Heart left ventricle (tissue), 16 donors: ENCODE measurements at regions of chr2 and their contacts with region 1.

Region 1: DNA sequence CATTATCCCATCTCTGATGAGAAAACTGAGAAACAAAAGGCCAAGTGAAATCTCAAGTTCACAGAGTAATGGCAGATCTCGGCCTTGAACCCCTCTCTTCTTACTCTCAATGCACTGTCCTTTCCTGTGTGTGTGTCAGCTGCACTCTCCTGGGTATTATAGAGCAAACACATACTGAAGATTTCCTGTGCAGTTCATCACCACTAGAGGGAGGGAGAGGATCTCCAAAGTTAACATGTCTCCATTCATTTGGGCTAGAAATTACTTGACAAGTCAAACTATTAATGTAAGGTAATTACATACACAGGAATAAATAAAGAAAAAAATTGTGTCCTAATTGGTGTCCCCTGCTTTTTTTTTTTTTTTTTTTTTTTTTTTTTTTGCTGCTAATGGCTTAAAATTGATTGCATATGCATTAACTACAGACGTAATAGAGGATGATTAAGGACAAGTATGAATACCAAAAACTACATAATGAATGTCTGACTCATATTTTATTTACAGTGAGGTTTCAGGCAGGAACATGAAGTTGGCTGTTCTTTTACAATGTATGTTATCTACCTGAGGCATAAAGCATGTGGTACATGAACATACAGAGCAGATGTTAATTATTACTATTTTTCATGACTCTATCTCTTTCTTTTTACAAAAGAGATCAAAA is 269.2 kb downstream of the NYAP2 start:
- DNase-seq: peak in 1 of 5 donors; percentile 10
- ATAC-seq: peak in 3 of 4 donors; percentile 63 to 69 (median 67)
- H3K4me3 ChIP-seq: no peak overlapping the region
- H3K27ac ChIP-seq: no peak overlapping the region
- H3K4me1 ChIP-seq: no peaks in the 10 kb centered on the region
- H3K27me3 ChIP-seq: peaks cover 0 to 15% (median 0%) of the 10 kb centered on the region in 9 donors
- CTCF ChIP-seq: peak; percentile 43 to 76 (median 58)
- POLR2A ChIP-seq: no peak

Region 2: GRCh38 chr2:225797394-225797793 is 128.7 kb after region 1 on chr2:
- intact Hi-C with region 1: loop called in 2 of 10 experiments (anchors 10 kb)
- DNase-seq: no peak
- ATAC-seq: no peak
- H3K4me3 ChIP-seq: no peak overlapping the region
- H3K27ac ChIP-seq: no peak overlapping the region
- H3K4me1 ChIP-seq: no peaks in the 10 kb centered on the region
- H3K27me3 ChIP-seq: no peaks in the 10 kb centered on the region
- CTCF ChIP-seq: peak in 7 of 12 donors; percentile 11 to 48 (median 24)
- POLR2A ChIP-seq: no peak

Region 3: DNA sequence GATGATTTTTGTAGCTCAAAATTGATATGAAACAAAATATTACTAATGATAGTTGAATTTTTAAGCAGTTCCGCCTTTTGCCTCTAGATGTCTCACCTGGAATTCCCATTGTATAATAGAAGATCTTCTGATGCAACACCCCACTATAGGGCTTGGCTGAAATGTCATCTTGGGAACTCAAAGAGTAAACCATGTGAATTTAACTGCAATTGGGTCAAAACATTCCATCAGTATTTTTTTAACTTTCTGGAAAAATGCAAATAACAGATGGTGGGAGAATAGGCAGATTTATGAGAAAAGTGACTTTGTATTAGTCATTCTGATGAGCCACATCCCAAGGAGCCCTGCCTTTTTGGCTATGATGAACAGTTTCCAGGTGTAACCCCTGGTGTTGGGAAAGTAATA is 220.7 kb after region 1 on chr2:
- intact Hi-C with region 1: loop called in 1 of 10 experiments (anchors 10 kb)
- DNase-seq: peak in 1 of 5 donors; percentile 7
- ATAC-seq: peak in 2 of 4 donors; percentile 52 to 64
- H3K4me3 ChIP-seq: no peak overlapping the region
- H3K27ac ChIP-seq: no peak overlapping the region
- H3K4me1 ChIP-seq: no peaks in the 10 kb centered on the region
- H3K27me3 ChIP-seq: no peaks in the 10 kb centered on the region
- CTCF ChIP-seq: peak; percentile 49 to 86 (median 76)
- POLR2A ChIP-seq: no peak

Region 4: DNA sequence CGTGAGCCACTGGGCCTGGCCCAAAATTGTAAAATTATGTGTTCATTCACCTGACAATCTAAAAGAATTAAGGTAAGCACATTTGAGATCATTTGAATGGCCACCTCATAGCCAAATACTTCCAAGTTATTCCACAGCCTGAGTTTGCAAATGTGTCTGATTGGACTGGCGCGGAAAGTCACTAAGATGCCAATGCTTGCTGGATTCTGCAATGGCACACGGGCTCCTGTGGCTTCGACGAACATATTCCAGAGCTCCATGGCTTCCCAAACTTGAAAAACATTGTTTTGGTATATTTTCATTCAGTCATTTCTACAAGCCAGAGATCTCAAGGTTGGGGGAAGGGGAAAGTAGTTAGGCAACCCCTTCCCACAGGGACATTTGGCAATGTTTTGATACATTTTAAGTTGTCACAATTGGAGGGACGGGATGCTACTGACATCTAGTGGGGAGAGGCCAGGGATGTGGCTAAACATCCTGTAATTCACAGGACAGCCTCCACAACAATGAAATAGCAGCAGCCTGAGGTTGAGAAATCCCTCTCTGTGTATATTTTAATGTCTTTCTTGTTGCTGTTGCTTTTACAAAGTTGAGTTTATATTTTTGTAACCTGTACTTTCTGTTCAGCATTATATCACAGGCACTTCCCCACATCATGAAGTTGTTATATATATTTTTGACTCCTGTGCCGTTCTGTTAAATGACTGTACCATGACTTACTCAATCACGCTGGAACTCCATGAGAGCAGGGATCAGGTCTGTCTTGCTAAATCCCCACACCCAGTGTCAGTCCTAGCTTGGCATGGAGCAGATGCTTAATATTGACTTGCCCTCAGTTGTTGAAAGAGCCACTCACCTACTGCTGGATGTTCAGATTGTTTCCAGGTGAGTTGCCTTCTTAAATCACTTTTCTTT is 1438.4 kb after region 1 on chr2:
- intact Hi-C with region 1: loop called in 8 of 10 experiments (anchors 2 to 5 kb)
- DNase-seq: peak in 1 of 5 donors; percentile 22
- ATAC-seq: peak in 3 of 4 donors; percentile 37 to 66 (median 59)
- H3K4me3 ChIP-seq: no peak overlapping the region
- H3K27ac ChIP-seq: no peak overlapping the region
- H3K4me1 ChIP-seq: no peaks in the 10 kb centered on the region
- H3K27me3 ChIP-seq: no peaks in the 10 kb centered on the region
- CTCF ChIP-seq: peak; percentile 46 to 64 (median 56)
- POLR2A ChIP-seq: no peak